ENCODE measurements at regions of chrX and their contacts with region 1.

Region 1: GRCh38 chrX:139559383-139560042 is 29.0 kb downstream of the F9 start:
- DNase-seq: peak; percentile 43
- ATAC-seq: peak; percentile 82
- H3K4me3 ChIP-seq: no peak overlapping the region
- H3K27ac ChIP-seq: no peak overlapping the region
- H3K4me1 ChIP-seq: no peaks in the 10 kb centered on the region
- H3K27me3 ChIP-seq: no peaks in the 10 kb centered on the region; the same call in 1 of the 2 replicates
- CTCF ChIP-seq: peak; percentile 36; the same call in 1 of the 2 replicates
- POLR2A ChIP-seq: no peak
- RAD21 ChIP-seq: peak; percentile 19

Region 2: DNA sequence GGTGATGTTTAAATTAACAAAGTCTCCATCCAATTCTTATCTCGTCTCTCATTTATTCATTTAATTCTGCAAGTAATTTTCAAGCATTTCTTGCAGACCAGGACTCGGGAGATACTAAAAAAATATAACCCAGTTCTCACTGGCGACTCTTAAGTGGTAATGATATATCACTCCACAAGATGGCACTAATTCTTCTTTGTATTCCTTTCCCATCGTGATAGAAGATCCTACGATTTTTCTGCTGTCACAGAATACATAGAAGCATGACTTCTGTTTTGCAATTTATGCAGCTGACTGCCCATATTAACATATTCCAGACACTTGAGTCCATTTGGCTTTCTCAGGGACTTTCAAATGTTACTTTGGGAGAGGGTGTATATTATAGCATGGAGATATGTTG is 784.0 kb before region 1 on chrX:
- CTCF ChIA-PET with region 1: no interaction called
- POLR2A ChIA-PET with region 1: no interaction called
- dilution Hi-C with region 1: no loop called
- in situ Hi-C with region 1: no loop called
- intact Hi-C with region 1: loop called (anchors 1 kb)
- DNase-seq: peak; percentile 21
- ATAC-seq: peak; percentile 80
- H3K4me3 ChIP-seq: no peak overlapping the region
- H3K27ac ChIP-seq: no peak overlapping the region
- H3K4me1 ChIP-seq: no peaks in the 10 kb centered on the region
- H3K27me3 ChIP-seq: no peaks in the 10 kb centered on the region; the same call in 1 of the 2 replicates
- CTCF ChIP-seq: peak; percentile 42
- POLR2A ChIP-seq: no peak
- RAD21 ChIP-seq: peak; percentile 35

Region 3: GRCh38 chrX:138847928-138848327 is 711.6 kb before region 1 on chrX:
- CTCF ChIA-PET with region 1: no interaction called
- POLR2A ChIA-PET with region 1: no interaction called
- dilution Hi-C with region 1: no loop called
- in situ Hi-C with region 1: no loop called
- intact Hi-C with region 1: loop called (anchors 2 kb)
- DNase-seq: no peak
- ATAC-seq: no peak
- H3K4me3 ChIP-seq: no peak overlapping the region
- H3K27ac ChIP-seq: no peak overlapping the region
- H3K4me1 ChIP-seq: no peaks in the 10 kb centered on the region
- H3K27me3 ChIP-seq: no peaks in the 10 kb centered on the region
- CTCF ChIP-seq: no peak
- POLR2A ChIP-seq: no peak
- RAD21 ChIP-seq: no peak

Region 4: DNA sequence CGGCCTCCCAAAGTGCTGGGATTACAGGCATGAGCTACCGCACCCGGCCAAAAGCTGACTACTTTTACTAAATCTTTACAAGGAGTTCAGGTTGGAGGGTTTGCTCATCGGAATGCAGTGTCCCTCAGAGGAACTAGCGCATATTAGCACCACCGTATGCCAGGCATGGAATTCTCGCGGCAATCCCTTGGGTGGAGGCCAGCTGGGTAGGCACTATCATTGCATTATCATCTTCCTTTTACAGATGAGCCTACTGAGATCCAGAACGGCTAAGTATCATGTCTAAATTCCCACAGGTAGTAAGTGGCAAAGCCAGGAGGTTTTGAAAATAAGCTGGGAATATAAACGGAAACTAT is 411.9 kb after region 1 on chrX:
- CTCF ChIA-PET with region 1: no interaction called
- POLR2A ChIA-PET with region 1: no interaction called
- dilution Hi-C with region 1: no loop called
- in situ Hi-C with region 1: no loop called
- intact Hi-C with region 1: loop called (anchors 10 kb)
- DNase-seq: no peak
- ATAC-seq: no peak
- H3K4me3 ChIP-seq: no peak overlapping the region
- H3K27ac ChIP-seq: no peak overlapping the region
- H3K4me1 ChIP-seq: no peaks in the 10 kb centered on the region
- H3K27me3 ChIP-seq: no peaks in the 10 kb centered on the region; the same call in 1 of the 2 replicates
- CTCF ChIP-seq: no peak
- POLR2A ChIP-seq: no peak
- RAD21 ChIP-seq: no peak

Measured in IMR-90 (cell line).